Activated CD4-positive, alpha-beta memory T cell treated with anti-CD3 and anti-CD28 coated beads for 36 hours (primary cell): ENCODE measurements at regions of chr2 and their contacts with region 1.

Region 1: DNA sequence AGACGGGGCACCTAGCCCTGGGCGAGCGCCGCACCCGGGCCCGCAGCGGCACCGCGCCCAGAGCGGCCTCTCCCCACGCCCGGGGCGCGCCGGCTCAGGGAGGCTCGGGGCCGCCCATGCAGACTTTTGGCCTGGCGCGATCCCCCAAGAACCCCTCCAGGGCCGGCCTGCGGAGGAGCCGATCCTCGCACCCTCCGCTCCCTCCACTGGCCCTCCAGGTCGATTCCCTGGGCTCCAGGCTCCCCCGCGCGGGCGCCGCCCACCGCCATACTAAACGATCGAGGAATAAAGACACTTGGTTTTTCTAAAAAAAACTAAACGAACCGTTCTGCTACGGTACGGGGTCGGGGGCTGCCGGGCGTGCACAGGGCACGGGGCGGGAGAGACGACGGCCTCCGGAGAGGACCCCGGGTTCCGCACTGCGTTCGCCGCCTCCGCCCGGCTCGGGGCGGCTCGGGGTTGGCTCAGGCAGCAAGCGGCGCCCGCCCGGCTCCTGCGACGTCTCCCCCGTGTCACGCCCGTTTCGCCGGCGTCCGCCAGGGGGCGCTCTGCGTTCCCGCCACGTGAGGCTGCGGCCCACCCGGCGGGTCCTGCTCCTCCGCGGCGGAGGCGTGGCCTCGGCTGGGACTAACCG is 365 bp upstream of the KHK start:
- DNase-seq: peak; percentile 99
- H3K4me3 Mint-ChIP-seq: peak overlapping the region; percentile 81
- H3K27ac Mint-ChIP-seq: peak overlapping the region; percentile 73
- H3K4me1 Mint-ChIP-seq: peaks cover 19% of the 10 kb centered on the region
- H3K27me3 Mint-ChIP-seq: no peaks in the 10 kb centered on the region

Region 2: GRCh38 chr2:26959331-26959730 is 126.9 kb before region 1 on chr2:
- CTCF ChIA-PET with region 1: interaction called, 20 read pairs
- POLR2A ChIA-PET with region 1: no interaction called
- intact Hi-C with region 1: loop called (anchors 1 kb)
- DNase-seq: no peak
- H3K4me3 Mint-ChIP-seq: no peak overlapping the region
- H3K27ac Mint-ChIP-seq: no peak overlapping the region
- H3K4me1 Mint-ChIP-seq: no peaks in the 10 kb centered on the region
- H3K27me3 Mint-ChIP-seq: peaks cover 18% of the 10 kb centered on the region

Region 3: GRCh38 chr2:27032495-27033252 is 53.5 kb before region 1 on chr2 and contains the start of gene TMEM214:
- CTCF ChIA-PET with region 1: interaction called, 3 read pairs
- POLR2A ChIA-PET with region 1: interaction called, 3 read pairs
- intact Hi-C with region 1: loop called (anchors 1 kb)
- DNase-seq: peak; percentile 89
- H3K4me3 Mint-ChIP-seq: peak within 1 kb of the TSS; percentile 93
- H3K27ac Mint-ChIP-seq: peak within 1 kb of the TSS; percentile 78
- H3K4me1 Mint-ChIP-seq: peaks cover 40% of the 10 kb centered on the region
- H3K27me3 Mint-ChIP-seq: no peaks in the 10 kb centered on the region
- total RNA-seq, gene TMEM214: 52.4 to 60.1 TPM

Region 4: DNA sequence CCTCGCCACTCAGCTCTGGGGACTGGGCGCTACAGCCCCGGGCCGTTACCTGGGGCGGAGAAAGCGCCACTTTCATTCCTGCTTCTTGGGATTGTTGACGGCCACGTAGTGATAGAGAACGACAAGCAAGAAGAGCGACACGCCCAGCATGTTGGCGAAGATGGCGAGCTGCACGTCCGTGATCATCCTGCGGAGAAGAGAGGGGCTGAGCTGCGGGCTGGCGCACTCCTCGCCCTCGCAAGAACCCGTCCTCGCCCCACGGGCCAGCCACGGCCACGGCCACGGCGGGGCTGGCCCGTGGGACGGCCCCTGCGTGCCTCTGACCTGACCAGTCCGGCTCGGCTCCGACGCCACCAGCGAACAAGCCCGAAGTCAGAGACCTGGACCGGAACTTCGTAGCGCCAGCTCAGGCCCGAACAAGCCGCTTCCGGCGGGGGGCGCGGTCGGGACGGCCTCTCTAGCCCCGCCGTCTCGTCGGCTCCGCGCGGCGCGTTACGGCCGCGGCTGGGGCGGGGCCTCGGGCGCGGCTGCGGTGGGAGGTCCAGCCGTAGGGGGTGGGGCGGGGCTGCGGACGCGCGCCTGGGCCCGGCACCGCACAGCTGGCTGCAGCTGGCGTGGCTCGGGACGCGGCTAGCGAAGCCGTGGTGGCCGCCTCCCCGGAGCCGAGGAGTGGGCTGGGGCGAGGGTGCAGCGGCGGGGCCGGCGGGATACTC is 14.8 kb before region 1 on chr2 and contains the start of gene OST4:
- CTCF ChIA-PET with region 1: interaction called, 29 read pairs
- POLR2A ChIA-PET with region 1: interaction called, 21 read pairs
- intact Hi-C with region 1: loop called (anchors 1 kb)
- DNase-seq: peak; percentile 94
- H3K4me3 Mint-ChIP-seq: peak within 1 kb of the TSS; percentile 94
- H3K27ac Mint-ChIP-seq: peak within 1 kb of the TSS; percentile 93
- H3K4me1 Mint-ChIP-seq: peaks cover 71% of the 10 kb centered on the region
- H3K27me3 Mint-ChIP-seq: no peaks in the 10 kb centered on the region
- total RNA-seq, gene OST4: 307 to 310 TPM

Region 5: DNA sequence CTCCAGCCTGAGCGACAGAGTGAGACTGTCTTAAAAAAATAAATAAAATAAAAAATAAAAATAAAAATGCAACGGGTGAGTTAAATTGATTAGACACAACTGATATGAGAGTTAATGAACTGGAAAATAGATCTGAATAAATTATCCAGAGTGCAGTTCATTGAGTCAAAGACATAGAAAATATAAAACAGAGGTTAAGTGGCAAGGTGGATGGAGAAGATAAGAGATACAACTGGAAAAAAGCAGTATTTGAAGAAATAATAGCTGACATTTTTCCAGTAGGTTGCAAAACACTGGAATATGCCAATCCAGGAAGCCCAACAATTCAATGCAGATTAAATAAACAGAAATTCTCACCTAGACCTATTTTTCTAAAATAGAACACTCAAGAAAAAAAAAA is 22.0 kb after region 1 on chr2:
- CTCF ChIA-PET with region 1: no interaction called
- POLR2A ChIA-PET with region 1: no interaction called
- intact Hi-C with region 1: no loop called
- DNase-seq: no peak
- H3K4me3 Mint-ChIP-seq: no peak overlapping the region
- H3K27ac Mint-ChIP-seq: no peak overlapping the region
- H3K4me1 Mint-ChIP-seq: no peaks in the 10 kb centered on the region
- H3K27me3 Mint-ChIP-seq: peaks cover 3% of the 10 kb centered on the region

Region 6: DNA sequence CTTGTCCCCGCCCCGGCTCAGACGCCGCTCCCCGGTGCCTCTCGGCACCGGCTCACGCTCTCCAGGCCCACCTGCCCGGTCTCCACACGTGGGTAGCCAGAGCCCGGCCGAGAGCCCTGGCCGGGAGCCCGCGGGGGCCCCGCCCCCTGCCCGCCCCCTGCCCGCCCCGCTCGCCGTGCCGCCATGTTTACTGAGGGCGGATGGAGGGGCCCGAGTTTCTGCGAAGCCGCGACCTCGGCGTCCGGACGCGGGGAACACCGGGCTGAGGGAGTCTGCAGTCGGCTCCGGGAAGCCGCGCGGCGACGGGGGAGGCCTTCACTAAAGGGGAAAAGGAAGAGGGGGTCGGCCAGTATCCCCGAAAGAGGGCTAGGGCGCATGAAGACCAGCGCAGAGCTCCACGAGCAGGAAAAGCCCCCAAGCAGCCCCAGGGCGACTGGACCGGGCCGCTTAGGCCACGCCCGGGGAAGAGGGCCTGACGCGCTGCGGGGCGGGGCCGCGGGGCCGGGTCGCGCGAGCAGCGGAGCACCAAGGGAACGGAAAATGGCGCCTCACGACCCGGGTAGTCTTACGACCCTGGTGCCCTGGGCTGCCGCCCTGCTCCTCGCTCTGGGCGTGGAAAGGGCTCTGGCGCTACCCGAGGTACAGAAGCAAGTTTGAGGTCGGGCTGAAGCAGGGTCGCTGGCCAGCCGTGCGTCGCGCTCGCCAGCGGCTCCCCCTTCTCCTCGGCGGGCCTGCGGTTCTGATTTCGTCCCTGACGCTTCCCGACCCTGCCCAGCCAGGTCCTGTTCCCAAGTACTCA is 125.8 kb after region 1 on chr2 and contains the starts of genes ATRAID and SLC5A6:
- CTCF ChIA-PET with region 1: interaction called, 3 read pairs
- POLR2A ChIA-PET with region 1: interaction called, 3 read pairs
- intact Hi-C with region 1: loop called (anchors 5 kb)
- DNase-seq: peak; percentile 92
- H3K4me3 Mint-ChIP-seq: peak within 1 kb of the TSS; percentile 98
- H3K27ac Mint-ChIP-seq: peak within 1 kb of the TSS; percentile 99
- H3K4me1 Mint-ChIP-seq: peaks cover 48% of the 10 kb centered on the region
- H3K27me3 Mint-ChIP-seq: no peaks in the 10 kb centered on the region
- total RNA-seq, gene ATRAID: 84.0 to 92.7 TPM
- total RNA-seq, gene SLC5A6: 29.2 to 30.2 TPM

Region 7: DNA sequence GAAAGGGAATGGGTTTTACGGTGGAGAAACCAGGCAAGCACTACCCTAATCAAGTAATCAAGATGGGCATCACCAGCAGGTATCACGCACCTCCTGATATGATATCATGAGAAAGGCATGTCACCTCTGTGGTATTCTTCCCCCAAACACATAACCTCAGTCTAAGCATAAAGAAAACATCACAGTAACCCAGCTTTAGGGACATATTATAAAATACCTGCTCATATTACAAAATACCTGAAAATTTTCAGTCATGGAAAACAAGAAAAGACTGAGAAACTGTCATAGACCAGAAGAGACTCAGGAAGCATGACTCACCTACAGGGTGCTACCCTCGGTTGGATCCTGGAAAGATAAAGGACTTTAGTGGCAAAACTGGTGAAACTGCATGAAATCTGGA is 441.0 kb after region 1 on chr2:
- CTCF ChIA-PET with region 1: no interaction called
- POLR2A ChIA-PET with region 1: no interaction called
- intact Hi-C with region 1: no loop called
- DNase-seq: no peak
- H3K4me3 Mint-ChIP-seq: no peak overlapping the region
- H3K27ac Mint-ChIP-seq: no peak overlapping the region
- H3K4me1 Mint-ChIP-seq: no peaks in the 10 kb centered on the region
- H3K27me3 Mint-ChIP-seq: no peaks in the 10 kb centered on the region